CD4-positive, alpha-beta memory T cell (primary cell): ENCODE measurements at regions of chr10 and their contacts with region 1.

Region 1: DNA sequence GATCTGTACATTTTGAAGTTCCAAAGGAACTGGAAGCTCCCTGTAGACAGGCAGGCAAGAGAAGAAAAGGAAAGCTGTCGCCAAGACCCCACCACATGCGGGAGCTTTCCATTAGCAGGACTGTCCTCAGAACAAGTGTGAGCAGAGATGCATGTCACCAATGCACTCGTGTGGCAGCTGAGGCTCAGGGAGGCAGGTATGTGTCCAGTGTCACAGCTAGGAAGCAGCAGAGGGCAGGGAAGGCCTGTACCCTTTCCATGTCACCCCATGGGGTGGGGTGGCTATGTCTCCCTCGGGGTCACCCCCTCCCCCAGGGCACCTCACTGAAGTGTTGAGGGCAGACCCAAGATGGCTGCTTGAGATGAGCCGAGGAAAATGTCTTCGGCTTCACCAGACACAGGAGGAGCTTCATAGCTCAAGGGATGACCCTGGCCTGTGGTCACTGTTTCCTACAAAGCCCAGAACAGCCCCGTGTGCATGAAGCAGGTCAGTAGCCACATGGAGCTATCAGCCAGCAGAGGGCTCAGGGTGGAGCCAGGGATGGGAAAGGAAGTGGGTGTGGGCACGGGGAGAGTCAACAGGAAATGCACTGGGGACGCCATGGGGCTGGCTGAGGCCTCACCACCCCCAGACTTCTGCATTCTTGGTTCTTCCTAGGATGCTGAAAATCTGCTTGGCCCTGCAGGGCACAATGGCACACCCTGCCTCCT is 96.6 kb downstream of the FAM53B start:
- DNase-seq: peak; percentile 75 to 85 (median 78)
- H3K4me3 ChIP-seq: peak overlapping the region; percentile 26 to 34
- H3K4me3 Mint-ChIP-seq: peak overlapping the region; percentile 41 to 88 (median 80)
- H3K27ac ChIP-seq: peak overlapping the region; percentile 79
- H3K27ac Mint-ChIP-seq: peak overlapping the region; percentile 92 to 99 (median 96)
- H3K4me1 ChIP-seq: peaks cover 95% of the 10 kb centered on the region
- H3K4me1 Mint-ChIP-seq: peaks cover 69 to 100% (median 90%) of the 10 kb centered on the region in 4 donors
- H3K27me3 ChIP-seq: no peaks in the 10 kb centered on the region
- H3K27me3 Mint-ChIP-seq: no peaks in the 10 kb centered on the region

Region 2: DNA sequence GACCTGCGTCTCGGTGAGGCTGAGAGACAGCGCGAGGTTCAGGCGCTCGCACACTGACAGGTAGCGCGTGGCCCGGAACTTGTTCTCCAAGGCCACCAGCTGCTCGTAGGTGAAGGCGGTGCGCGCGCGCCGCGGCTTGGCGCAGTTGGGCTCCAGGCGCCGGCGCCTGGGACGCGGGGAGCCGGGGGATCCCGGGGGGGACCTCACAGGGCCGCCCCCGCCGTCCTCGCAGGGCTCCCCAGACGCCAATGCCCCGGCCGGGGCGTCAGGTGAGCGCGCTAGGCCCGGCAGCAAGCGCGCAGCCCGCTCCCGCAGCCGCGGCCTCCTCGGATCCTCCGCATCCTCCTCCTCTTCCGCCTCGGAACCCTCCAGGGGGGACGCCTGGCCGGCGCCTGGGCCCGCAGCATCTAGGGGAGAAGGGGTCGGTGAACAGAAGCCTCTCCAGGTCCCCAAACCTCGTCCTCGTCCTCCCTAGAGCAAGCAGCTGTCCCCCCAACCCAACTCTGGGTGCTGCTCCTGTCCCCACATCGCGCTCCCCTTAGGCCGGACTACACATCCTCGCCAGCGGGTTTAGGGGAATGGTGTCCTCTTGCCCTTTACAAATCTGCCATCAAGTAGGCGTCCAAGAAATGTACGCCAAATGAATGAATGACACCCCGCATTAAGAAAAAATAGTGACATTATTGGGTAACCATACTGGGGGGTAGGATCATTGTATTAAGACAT is 199.7 kb before region 1 on chr10:
- CTCF ChIA-PET with region 1: no interaction called
- POLR2A ChIA-PET with region 1: no interaction called
- intact Hi-C with region 1: no loop called
- DNase-seq: no peak
- H3K4me3 ChIP-seq: no peak overlapping the region
- H3K4me3 Mint-ChIP-seq: peak overlapping the region in 7 of 8 donors; percentile 28 to 79 (median 60)
- H3K27ac ChIP-seq: no peak overlapping the region
- H3K27ac Mint-ChIP-seq: no peak overlapping the region
- H3K4me1 ChIP-seq: peaks cover 16% of the 10 kb centered on the region
- H3K4me1 Mint-ChIP-seq: peaks cover 11 to 33% (median 21%) of the 10 kb centered on the region in 4 donors
- H3K27me3 ChIP-seq: peaks cover 36% of the 10 kb centered on the region
- H3K27me3 Mint-ChIP-seq: peaks cover 61 to 64% of the 10 kb centered on the region in 2 donors

Region 3: GRCh38 chr10:124612611-124613498 is 34.7 kb before region 1 on chr10:
- CTCF ChIA-PET with region 1: no interaction called
- POLR2A ChIA-PET with region 1: interaction called, 16 read pairs
- intact Hi-C with region 1: no loop called
- DNase-seq: peak in 4 of 5 donors; percentile 21 to 57 (median 28)
- H3K4me3 ChIP-seq: no peak overlapping the region
- H3K4me3 Mint-ChIP-seq: peak overlapping the region in 5 of 8 donors; percentile 59 to 80 (median 75)
- H3K27ac ChIP-seq: peak overlapping the region; percentile 37
- H3K27ac Mint-ChIP-seq: peak overlapping the region; percentile 77 to 92 (median 88)
- H3K4me1 ChIP-seq: peaks cover 36% of the 10 kb centered on the region
- H3K4me1 Mint-ChIP-seq: peaks cover 19 to 55% (median 34%) of the 10 kb centered on the region in 4 donors
- H3K27me3 ChIP-seq: no peaks in the 10 kb centered on the region
- H3K27me3 Mint-ChIP-seq: no peaks in the 10 kb centered on the region

Region 4: DNA sequence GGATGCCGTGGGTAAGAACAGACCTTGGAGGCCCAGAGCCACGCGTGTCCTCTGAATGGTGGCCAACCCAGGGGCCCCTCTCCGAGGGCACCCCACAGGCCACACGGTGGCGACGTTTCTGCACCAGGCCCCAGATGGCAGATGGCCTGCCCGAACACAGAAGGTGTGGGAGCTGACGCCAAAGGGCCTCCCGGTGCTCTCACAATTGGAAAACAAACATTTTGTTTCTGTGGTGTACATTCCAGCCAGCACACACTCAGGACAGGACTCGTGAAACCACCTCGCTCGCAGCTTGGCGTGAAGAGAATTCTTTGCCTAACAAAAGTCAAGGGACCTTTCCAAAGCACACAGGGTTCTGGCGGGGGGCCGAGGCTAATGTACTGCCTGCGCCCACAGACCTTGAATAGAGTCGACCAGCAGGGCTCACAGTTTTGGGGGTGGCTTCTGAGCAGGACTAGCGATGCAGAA is 15.5 kb before region 1 on chr10:
- CTCF ChIA-PET with region 1: interaction called, 35 read pairs
- POLR2A ChIA-PET with region 1: interaction called, 60 read pairs
- intact Hi-C with region 1: no loop called
- DNase-seq: peak in 1 of 5 donors; percentile 37
- H3K4me3 ChIP-seq: no peak overlapping the region
- H3K4me3 Mint-ChIP-seq: no peak overlapping the region
- H3K27ac ChIP-seq: no peak overlapping the region
- H3K27ac Mint-ChIP-seq: peak overlapping the region in 6 of 7 donors; percentile 13 to 83 (median 62)
- H3K4me1 ChIP-seq: peaks cover 75% of the 10 kb centered on the region
- H3K4me1 Mint-ChIP-seq: peaks cover 45 to 95% (median 65%) of the 10 kb centered on the region in 4 donors
- H3K27me3 ChIP-seq: no peaks in the 10 kb centered on the region
- H3K27me3 Mint-ChIP-seq: no peaks in the 10 kb centered on the region

Region 5: GRCh38 chr10:124665980-124666379 is 18.4 kb after region 1 on chr10:
- CTCF ChIA-PET with region 1: interaction called, 77 read pairs
- POLR2A ChIA-PET with region 1: interaction called, 439 read pairs
- intact Hi-C with region 1: loop called (anchors 2 kb)
- DNase-seq: peak in 1 of 5 donors; percentile 1
- H3K4me3 ChIP-seq: no peak overlapping the region
- H3K4me3 Mint-ChIP-seq: no peak overlapping the region
- H3K27ac ChIP-seq: no peak overlapping the region
- H3K27ac Mint-ChIP-seq: peak overlapping the region in 3 of 7 donors; percentile 51 to 86 (median 61)
- H3K4me1 ChIP-seq: peaks cover 93% of the 10 kb centered on the region
- H3K4me1 Mint-ChIP-seq: peaks cover 46 to 96% (median 59%) of the 10 kb centered on the region in 4 donors
- H3K27me3 ChIP-seq: no peaks in the 10 kb centered on the region
- H3K27me3 Mint-ChIP-seq: no peaks in the 10 kb centered on the region

Region 6: DNA sequence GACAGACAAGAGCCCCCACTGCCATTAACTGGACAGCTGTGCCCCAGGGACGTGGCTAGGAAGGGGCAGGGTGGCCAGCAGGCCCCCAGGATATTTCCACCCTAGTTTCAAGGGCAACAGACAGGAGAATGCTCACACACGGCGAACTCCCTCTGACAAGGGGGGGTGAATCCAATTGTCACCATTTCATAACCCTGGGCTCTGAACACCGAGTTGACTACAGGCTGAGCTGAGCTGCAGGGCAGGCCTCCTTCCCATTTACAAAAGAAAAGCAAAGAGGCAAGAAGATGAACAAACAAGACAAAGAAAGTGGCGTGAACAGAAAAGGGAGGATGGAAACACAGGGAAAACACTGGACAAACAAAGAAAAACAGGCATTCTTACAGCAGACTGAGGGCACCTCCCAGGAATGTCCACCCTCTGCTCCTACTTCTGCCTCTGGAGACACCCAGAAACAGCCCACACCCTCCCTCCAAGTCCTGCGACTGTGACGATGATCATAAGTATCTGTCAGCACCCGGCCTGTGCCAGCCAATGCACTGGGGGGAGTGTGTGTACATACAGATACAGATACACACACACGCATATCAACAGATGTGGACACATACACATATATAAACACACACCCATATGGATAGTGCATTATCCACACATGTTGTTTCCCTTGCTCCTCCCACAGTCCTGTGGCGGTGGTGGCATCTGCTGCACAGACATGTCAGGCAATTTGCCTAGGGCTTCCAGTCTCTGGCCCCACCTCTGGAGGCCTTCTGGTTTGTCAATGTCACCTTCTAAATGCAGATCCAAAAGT is 30.4 kb after region 1 on chr10:
- CTCF ChIA-PET with region 1: interaction called, 70 read pairs
- POLR2A ChIA-PET with region 1: interaction called, 439 read pairs
- intact Hi-C with region 1: no loop called
- DNase-seq: no peak
- H3K4me3 ChIP-seq: peak overlapping the region; percentile 36 to 56
- H3K4me3 Mint-ChIP-seq: peak overlapping the region; percentile 76 to 88 (median 79)
- H3K27ac ChIP-seq: peak overlapping the region; percentile 54
- H3K27ac Mint-ChIP-seq: peak overlapping the region; percentile 85 to 97 (median 92)
- H3K4me1 ChIP-seq: peaks cover 96% of the 10 kb centered on the region
- H3K4me1 Mint-ChIP-seq: peaks cover 70 to 99% (median 89%) of the 10 kb centered on the region in 4 donors
- H3K27me3 ChIP-seq: no peaks in the 10 kb centered on the region
- H3K27me3 Mint-ChIP-seq: no peaks in the 10 kb centered on the region

Region 7: DNA sequence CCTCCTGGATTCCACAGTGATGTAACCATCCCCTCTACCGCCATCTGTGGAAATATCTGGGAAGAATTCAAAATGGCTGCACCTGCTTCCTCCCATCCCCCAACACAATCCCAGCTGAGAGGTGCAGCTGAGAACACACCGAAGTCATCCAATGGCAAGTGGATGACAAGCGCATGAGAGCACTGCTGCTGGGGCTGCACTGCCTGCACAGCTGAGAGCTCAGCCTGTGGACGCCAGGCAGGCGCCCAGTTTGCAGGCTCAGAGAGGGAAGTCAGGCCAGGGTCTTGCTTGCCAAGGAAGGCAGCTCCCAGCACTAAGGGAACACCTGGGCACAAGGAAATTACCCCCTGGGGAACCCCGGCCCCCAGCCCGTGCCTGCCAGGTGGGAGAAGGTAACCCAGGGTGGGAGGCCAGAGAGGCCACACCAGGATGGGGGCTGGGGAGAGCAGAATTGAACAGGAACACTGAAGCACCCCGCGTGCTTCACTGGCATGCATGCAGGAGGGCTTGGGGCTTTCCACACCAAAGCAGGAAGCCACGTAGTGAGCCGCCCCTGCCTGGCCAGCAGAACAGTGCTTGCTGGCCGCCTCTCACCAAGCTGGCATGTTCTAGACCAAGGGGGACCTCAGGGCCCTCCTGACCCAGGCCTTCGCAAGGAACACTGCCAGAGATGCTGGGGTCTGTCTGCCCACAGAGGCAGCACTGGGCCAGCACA is 50.4 kb after region 1 on chr10:
- CTCF ChIA-PET with region 1: interaction called, 48 read pairs
- POLR2A ChIA-PET with region 1: interaction called, 91 read pairs
- intact Hi-C with region 1: loop called (anchors 2 kb)
- DNase-seq: peak; percentile 40 to 79 (median 50)
- H3K4me3 ChIP-seq: peak overlapping the region; percentile 11 to 30
- H3K4me3 Mint-ChIP-seq: peak overlapping the region; percentile 20 to 96 (median 80)
- H3K27ac ChIP-seq: peak overlapping the region; percentile 90
- H3K27ac Mint-ChIP-seq: peak overlapping the region; percentile 92 to 99 (median 97)
- H3K4me1 ChIP-seq: peaks cover 100% of the 10 kb centered on the region
- H3K4me1 Mint-ChIP-seq: peaks cover 69 to 100% (median 93%) of the 10 kb centered on the region in 4 donors
- H3K27me3 ChIP-seq: no peaks in the 10 kb centered on the region
- H3K27me3 Mint-ChIP-seq: no peaks in the 10 kb centered on the region

Region 8: DNA sequence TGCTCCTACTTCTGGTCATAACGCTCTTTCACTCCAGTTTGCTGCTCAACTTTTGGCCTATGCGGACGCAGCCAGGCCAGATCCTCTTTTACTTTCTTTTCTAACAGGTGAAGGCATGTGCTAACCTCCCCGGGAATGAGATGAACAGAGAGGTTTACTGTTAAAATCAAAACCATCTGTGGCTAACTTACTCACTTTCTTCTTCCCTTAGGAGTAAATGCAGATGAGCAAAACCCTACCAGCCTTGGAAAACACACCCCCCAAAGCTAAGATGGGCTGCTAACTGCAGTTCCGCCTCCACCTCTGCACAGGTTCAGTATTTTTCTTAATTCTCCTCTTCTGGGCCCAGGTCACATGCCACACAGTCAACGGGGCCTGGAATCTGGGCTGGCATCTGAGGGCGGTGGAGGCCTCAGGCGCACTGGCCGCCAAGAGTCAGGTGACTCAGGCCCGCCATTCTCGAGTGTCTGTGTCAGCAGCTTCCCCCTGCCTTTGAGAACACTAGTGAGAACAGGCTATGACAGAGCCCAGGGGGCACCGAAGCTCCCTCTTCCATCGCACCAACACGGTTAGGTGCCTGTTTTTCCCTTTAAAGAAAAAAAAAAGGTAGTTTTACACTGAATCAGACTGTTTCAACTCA is 85.5 kb after region 1 on chr10:
- CTCF ChIA-PET with region 1: interaction called, 11 read pairs
- POLR2A ChIA-PET with region 1: interaction called, 74 read pairs
- intact Hi-C with region 1: no loop called
- DNase-seq: peak; percentile 37 to 77 (median 48)
- H3K4me3 ChIP-seq: peak overlapping the region; percentile 9 to 15
- H3K4me3 Mint-ChIP-seq: peak overlapping the region; percentile 72 to 93 (median 80)
- H3K27ac ChIP-seq: peak overlapping the region; percentile 78
- H3K27ac Mint-ChIP-seq: peak overlapping the region; percentile 87 to 96 (median 94)
- H3K4me1 ChIP-seq: peaks cover 100% of the 10 kb centered on the region
- H3K4me1 Mint-ChIP-seq: peaks cover 77 to 100% (median 90%) of the 10 kb centered on the region in 4 donors
- H3K27me3 ChIP-seq: no peaks in the 10 kb centered on the region
- H3K27me3 Mint-ChIP-seq: no peaks in the 10 kb centered on the region